Calu3 (cell line): ENCODE measurements at regions of chr3 and their contacts with region 1.

Region 1: DNA sequence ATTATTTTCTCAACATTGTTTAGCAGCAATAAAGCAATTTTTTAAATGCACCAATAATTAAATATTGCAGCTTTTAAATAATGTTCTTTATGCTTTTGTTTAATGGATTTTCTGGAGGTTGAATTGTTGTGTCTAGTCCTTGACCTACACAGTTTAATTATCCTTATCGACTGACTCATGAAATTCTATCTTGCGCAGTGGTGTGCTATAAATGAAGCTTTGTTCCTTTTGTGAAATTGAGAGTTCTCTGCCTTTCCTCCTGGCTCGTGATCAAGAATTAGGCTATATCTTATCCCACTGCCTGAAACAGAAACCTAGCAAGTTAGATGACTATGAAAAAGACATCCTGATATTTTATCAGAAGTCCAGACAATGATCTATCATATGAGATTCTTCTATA is 37.0 kb upstream of the PIK3R4 start:
- DNase-seq: peak; percentile 51
- H3K4me3 Mint-ChIP-seq: peak overlapping the region; percentile 24
- H3K27ac Mint-ChIP-seq: peak overlapping the region; percentile 91
- H3K4me1 Mint-ChIP-seq: peaks cover 50% of the 10 kb centered on the region
- H3K27me3 Mint-ChIP-seq: no peaks in the 10 kb centered on the region
- CTCF ChIP-seq: no peak

Region 2: GRCh38 chr3:130820976-130821375 is 37.3 kb after region 1 on chr3:
- CTCF ChIA-PET with region 1: interaction called, 4 read pairs
- intact Hi-C with region 1: loop called (anchors 1 kb)
- DNase-seq: peak; percentile 89
- H3K4me3 Mint-ChIP-seq: peak overlapping the region; percentile 37
- H3K27ac Mint-ChIP-seq: peak overlapping the region; percentile 98
- H3K4me1 Mint-ChIP-seq: peaks cover 73% of the 10 kb centered on the region
- H3K27me3 Mint-ChIP-seq: no peaks in the 10 kb centered on the region
- CTCF ChIP-seq: no peak